Gastrocnemius medialis (tissue), 4 donors: ENCODE measurements at regions of chr11 and their contacts with region 1.

Region 1: DNA sequence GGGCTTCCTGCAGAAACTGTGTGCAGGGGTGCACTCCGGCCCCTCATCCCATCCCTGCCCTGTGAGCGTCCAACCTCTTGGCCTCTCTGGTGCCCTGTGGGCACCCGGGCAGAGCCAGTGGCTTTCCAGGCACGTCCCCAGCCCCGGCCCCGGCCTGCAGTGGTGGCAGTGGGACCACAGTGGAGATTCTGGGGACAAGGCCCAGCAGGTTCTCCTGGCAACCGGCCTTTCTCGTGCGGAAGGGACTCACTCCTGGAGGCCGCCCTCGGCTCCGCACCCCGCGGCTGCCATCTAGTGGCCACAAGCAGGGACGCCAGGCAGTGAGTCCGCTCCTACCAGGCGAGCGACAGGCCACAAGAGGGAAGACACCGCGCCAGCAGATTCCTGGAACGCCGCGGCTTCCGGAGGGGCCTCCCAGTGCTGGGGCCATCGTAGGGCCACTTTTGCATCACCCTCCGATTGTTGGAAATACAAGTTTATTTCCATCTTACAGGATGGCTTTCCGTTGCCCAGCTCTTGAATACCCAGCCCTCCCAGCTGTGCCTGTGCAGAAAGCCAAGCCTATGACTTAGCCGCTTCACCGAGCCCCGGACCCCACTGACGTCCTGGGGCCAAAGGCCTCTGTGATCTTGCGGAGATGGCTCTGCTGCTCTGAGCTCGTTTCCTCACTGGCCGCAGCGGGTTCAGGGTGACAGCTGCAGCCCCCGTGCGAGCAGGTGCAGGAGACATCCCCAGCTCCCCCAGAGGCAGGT is 357.3 kb downstream of the CTTN start:
- DNase-seq: peak; percentile 35 to 51
- ATAC-seq: peak; percentile 88 to 93
- H3K4me3 ChIP-seq: no peak overlapping the region
- H3K27ac ChIP-seq: no peak overlapping the region
- H3K4me1 ChIP-seq: no peaks in the 10 kb centered on the region
- H3K27me3 ChIP-seq: peaks cover 6 to 9% (median 8%) of the 10 kb centered on the region in 3 donors
- CTCF ChIP-seq: peak; percentile 85 to 96 (median 92)
- POLR2A ChIP-seq: no peak

Region 2: GRCh38 chr11:70467201-70468085 is 288.1 kb before region 1 on chr11:
- in situ Hi-C with region 1: loop called (anchors 5 kb)
- intact Hi-C with region 1: loop called (anchors 1 kb)
- DNase-seq: peak in 1 of 2 donors; percentile 22
- ATAC-seq: peak in 1 of 2 donors; percentile 32
- H3K4me3 ChIP-seq: no peak overlapping the region
- H3K27ac ChIP-seq: no peak overlapping the region
- H3K4me1 ChIP-seq: peaks cover 0 to 9% of the 10 kb centered on the region in 2 donors
- H3K27me3 ChIP-seq: no peaks in the 10 kb centered on the region
- CTCF ChIP-seq: peak; percentile 84 to 96 (median 87)
- POLR2A ChIP-seq: peak in 1 of 2 donors; percentile 3

Region 3: GRCh38 chr11:70625582-70626518 is 129.7 kb before region 1 on chr11:
- in situ Hi-C with region 1: no loop called
- intact Hi-C with region 1: no loop called
- DNase-seq: no peak
- ATAC-seq: peak; percentile 59 to 75
- H3K4me3 ChIP-seq: no peak overlapping the region
- H3K27ac ChIP-seq: no peak overlapping the region
- H3K4me1 ChIP-seq: peaks cover 6 to 18% of the 10 kb centered on the region in 2 donors
- H3K27me3 ChIP-seq: no peaks in the 10 kb centered on the region
- CTCF ChIP-seq: no peak
- POLR2A ChIP-seq: no peak